Transverse colon (tissue), 4 donors: ENCODE measurements at regions of chr5 and their contacts with region 1.

Region 1: DNA sequence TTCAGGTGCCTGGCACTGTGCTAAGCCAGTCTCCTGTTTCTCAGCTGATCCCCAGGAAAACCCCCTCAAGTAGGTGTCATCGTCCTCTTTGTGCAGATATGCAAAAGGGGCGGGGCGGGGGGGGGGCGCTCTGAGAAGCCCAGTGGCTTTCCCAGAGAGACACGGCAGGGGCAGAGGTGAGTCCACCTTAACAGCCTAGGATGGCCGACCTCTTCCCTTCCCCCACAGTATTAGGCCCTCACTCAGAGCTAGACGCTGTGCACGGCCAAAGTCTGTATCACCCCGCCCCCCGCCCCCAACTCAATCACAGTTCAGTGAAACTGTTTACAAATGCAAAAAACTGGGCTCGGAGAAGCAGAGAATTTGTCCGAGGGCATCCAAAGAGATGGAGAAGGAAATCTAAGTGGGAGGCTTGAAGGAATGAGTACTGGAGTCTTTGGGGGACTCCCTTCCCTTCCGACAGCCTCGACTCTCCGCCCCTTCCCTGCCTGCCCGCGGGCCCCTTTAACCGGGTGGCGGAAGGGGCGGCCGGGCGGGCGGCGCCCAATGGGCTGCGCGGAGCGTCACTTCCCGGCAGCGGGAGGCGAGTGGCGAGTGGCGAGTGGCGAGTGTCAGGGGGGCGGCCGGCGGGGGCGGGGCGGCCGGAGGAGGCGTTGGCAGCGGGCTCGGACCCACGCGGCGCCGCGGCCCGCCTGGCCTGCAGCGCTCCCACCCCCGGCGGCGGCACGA is at the start of gene ERGIC1:
- DNase-seq: peak; percentile 91
- H3K4me3 ChIP-seq: peak within 1 kb of the TSS; percentile 64 to 96 (median 76)
- H3K27ac ChIP-seq: peak within 1 kb of the TSS; percentile 89 to 94 (median 92)
- H3K4me1 ChIP-seq: peaks cover 34 to 47% (median 40%) of the 10 kb centered on the region in 4 donors
- H3K27me3 ChIP-seq: no peaks in the 10 kb centered on the region
- CTCF ChIP-seq: no peak
- EP300 ChIP-seq: no peak
- POLR2A ChIP-seq: peak; percentile 69
- total RNA-seq, gene ERGIC1: 125 to 252 (median 184) TPM

Region 2: GRCh38 chr5:172770675-172771438 is 63.0 kb before region 1 on chr5 and contains the start of gene DUSP1:
- in situ Hi-C with region 1: loop called in 1 of 4 experiments (anchors 10 kb)
- intact Hi-C with region 1: loop called (anchors 10 kb)
- DNase-seq: peak; percentile 99
- H3K4me3 ChIP-seq: peak within 1 kb of the TSS; percentile 81 to 98 (median 82)
- H3K27ac ChIP-seq: peak within 1 kb of the TSS; percentile 99 to 100 (median 100)
- H3K4me1 ChIP-seq: peaks cover 24 to 75% (median 54%) of the 10 kb centered on the region in 4 donors
- H3K27me3 ChIP-seq: no peaks in the 10 kb centered on the region
- CTCF ChIP-seq: peak; percentile 32 to 80 (median 56)
- EP300 ChIP-seq: peak; percentile 59
- POLR2A ChIP-seq: peak; percentile 100
- total RNA-seq, gene DUSP1: 469 to 701 (median 567) TPM

Region 3: GRCh38 chr5:172868924-172869591 is 35.2 kb after region 1 on chr5:
- in situ Hi-C with region 1: no loop called
- intact Hi-C with region 1: loop called (anchors 5 kb)
- DNase-seq: peak; percentile 67
- H3K4me3 ChIP-seq: no peak overlapping the region
- H3K27ac ChIP-seq: peak overlapping the region; percentile 74 to 91 (median 86)
- H3K4me1 ChIP-seq: peaks cover 43 to 61% (median 53%) of the 10 kb centered on the region in 4 donors
- H3K27me3 ChIP-seq: no peaks in the 10 kb centered on the region
- CTCF ChIP-seq: peak in 2 of 5 experiments; percentile 16 to 17
- EP300 ChIP-seq: peak; percentile 96
- POLR2A ChIP-seq: peak; percentile 6